Ascending aorta (tissue), 2 donors: ENCODE measurements at regions of chr1 and their contacts with region 1.

Region 1: DNA sequence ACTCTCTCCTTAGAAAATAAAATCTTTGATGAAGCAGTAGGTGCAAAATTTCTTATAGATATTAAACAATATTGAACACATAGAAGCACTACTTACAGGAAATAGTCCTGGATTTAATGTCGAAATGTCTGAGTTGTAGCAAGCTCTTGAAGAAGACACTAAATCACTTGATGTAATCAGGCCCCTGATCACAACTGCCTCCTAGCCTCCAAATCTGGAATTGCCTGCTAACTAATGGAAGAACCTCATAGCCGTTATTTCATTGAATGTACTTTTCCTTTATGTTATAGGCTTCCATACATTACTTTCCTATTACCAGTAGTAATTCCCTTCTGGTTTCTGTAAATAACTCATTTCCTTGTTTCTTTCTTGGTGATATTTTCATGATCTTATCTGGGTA is 675.7 kb upstream of the CHRM3 start:
- DNase-seq: no peak
- H3K4me3 ChIP-seq: no peak overlapping the region
- H3K27ac ChIP-seq: no peak overlapping the region
- H3K4me1 ChIP-seq: no peaks in the 10 kb centered on the region
- H3K27me3 ChIP-seq: no peaks in the 10 kb centered on the region
- CTCF ChIP-seq: no peak

Region 2: GRCh38 chr1:238675221-238675620 is 35.5 kb before region 1 on chr1:
- intact Hi-C with region 1: loop called (anchors 1 kb)
- DNase-seq: no peak
- H3K4me3 ChIP-seq: no peak overlapping the region
- H3K27ac ChIP-seq: no peak overlapping the region
- H3K4me1 ChIP-seq: no peaks in the 10 kb centered on the region
- H3K27me3 ChIP-seq: no peaks in the 10 kb centered on the region
- CTCF ChIP-seq: no peak